CD4-positive, alpha-beta memory T cell (primary cell): ENCODE measurements at regions of chr11 and their contacts with region 1.

Region 1: DNA sequence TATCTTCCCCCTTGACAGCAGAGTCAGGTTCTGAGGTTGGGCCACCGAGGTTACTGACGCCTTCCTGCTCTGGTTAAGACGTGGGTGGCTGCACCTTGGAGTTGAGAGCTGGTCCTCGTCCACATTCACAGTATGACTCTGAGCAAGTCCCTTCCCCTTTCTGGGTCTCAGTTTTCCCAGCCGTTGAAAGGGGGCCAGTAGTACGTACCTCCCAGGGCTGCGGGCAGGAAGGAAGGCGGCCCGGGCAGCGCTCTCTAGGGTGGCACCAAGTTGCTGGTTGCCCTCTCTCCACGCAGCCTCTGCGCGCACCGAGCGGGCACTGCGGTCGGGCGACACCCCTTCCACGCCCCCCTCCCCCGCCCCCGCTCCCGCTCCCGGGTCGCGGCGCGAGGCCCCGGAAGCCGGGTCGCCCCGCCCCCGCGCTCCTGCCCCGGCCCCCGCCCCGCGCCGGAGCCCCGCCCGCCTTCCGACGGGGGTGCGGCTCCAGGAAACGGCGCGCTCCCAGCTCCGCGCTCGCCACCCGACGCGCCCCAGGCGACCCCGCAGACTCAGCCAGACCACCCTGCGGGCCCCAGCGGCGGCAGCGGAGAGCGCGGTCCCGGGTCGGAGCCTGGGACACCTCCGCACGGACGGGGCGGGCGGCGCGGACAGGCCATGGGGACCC is at the start of gene EHBP1L1:
- DNase-seq: peak; percentile 71 to 87 (median 81)
- H3K4me3 ChIP-seq: peak within 1 kb of the TSS; percentile 88 to 89
- H3K4me3 Mint-ChIP-seq: peak within 1 kb of the TSS; percentile 93 to 99 (median 96)
- H3K27ac ChIP-seq: peak within 1 kb of the TSS; percentile 99
- H3K27ac Mint-ChIP-seq: peak within 1 kb of the TSS; percentile 97 to 99 (median 98)
- H3K4me1 ChIP-seq: peaks cover 66% of the 10 kb centered on the region
- H3K4me1 Mint-ChIP-seq: peaks cover 25 to 76% (median 52%) of the 10 kb centered on the region in 4 donors
- H3K27me3 ChIP-seq: no peaks in the 10 kb centered on the region
- H3K27me3 Mint-ChIP-seq: no peaks in the 10 kb centered on the region
- total RNA-seq, gene EHBP1L1: 151 to 154 TPM

Region 2: DNA sequence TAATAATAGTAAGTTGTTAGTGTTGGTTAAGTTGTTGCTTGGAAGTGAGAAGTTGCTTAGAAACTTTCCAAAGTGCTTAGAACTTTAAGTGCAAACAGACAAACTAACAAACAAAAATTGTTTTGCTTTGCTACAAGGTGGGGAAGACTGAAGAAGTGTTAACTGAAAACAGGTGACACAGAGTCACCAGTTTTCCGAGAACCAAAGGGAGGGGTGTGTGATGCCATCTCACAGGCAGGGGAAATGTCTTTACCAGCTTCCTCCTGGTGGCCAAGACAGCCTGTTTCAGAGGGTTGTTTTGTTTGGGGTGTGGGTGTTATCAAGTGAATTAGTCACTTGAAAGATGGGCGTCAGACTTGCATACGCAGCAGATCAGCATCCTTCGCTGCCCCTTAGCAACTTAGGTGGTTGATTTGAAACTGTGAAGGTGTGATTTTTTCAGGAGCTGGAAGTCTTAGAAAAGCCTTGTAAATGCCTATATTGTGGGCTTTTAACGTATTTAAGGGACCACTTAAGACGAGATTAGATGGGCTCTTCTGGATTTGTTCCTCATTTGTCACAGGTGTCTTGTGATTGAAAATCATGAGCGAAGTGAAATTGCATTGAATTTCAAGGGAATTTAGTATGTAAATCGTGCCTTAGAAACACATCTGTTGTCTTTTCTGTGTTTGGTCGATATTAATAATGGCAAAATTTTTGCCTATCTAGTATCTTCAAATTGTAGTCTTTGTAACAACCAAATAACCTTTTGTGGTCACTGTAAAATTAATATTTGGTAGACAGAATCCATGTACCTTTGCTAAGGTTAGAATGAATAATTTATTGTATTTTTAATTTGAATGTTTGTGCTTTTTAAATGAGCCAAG is 150.4 kb before region 1 on chr11:
- CTCF ChIA-PET with region 1: no interaction called
- POLR2A ChIA-PET with region 1: interaction called, 59 read pairs
- intact Hi-C with region 1: loop called (anchors 5 kb)
- DNase-seq: peak; percentile 87 to 98 (median 94)
- H3K4me3 ChIP-seq: peak overlapping the region; percentile 95 to 99
- H3K4me3 Mint-ChIP-seq: peak overlapping the region; percentile 92 to 97 (median 95)
- H3K27ac ChIP-seq: peak overlapping the region; percentile 98
- H3K27ac Mint-ChIP-seq: peak overlapping the region; percentile 93 to 100 (median 97)
- H3K4me1 ChIP-seq: peaks cover 50% of the 10 kb centered on the region
- H3K4me1 Mint-ChIP-seq: peaks cover 41 to 83% (median 47%) of the 10 kb centered on the region in 4 donors
- H3K27me3 ChIP-seq: no peaks in the 10 kb centered on the region
- H3K27me3 Mint-ChIP-seq: peaks cover 0 to 4% of the 10 kb centered on the region in 2 donors

Region 3: GRCh38 chr11:65524741-65525545 is 50.8 kb before region 1 on chr11 and contains the start of gene SCYL1:
- CTCF ChIA-PET with region 1: interaction called, 6 read pairs
- POLR2A ChIA-PET with region 1: interaction called, 19 read pairs
- intact Hi-C with region 1: loop called (anchors 2 kb)
- DNase-seq: peak; percentile 72 to 82 (median 75)
- H3K4me3 ChIP-seq: peak within 1 kb of the TSS; percentile 78 to 83
- H3K4me3 Mint-ChIP-seq: peak within 1 kb of the TSS; percentile 81 to 92 (median 88)
- H3K27ac ChIP-seq: peak within 1 kb of the TSS; percentile 84
- H3K27ac Mint-ChIP-seq: peak within 1 kb of the TSS; percentile 81 to 98 (median 94)
- H3K4me1 ChIP-seq: peaks cover 54% of the 10 kb centered on the region
- H3K4me1 Mint-ChIP-seq: peaks cover 35 to 63% (median 49%) of the 10 kb centered on the region in 4 donors
- H3K27me3 ChIP-seq: no peaks in the 10 kb centered on the region
- H3K27me3 Mint-ChIP-seq: no peaks in the 10 kb centered on the region
- total RNA-seq, gene SCYL1: 72.5 to 81.3 TPM

Region 4: DNA sequence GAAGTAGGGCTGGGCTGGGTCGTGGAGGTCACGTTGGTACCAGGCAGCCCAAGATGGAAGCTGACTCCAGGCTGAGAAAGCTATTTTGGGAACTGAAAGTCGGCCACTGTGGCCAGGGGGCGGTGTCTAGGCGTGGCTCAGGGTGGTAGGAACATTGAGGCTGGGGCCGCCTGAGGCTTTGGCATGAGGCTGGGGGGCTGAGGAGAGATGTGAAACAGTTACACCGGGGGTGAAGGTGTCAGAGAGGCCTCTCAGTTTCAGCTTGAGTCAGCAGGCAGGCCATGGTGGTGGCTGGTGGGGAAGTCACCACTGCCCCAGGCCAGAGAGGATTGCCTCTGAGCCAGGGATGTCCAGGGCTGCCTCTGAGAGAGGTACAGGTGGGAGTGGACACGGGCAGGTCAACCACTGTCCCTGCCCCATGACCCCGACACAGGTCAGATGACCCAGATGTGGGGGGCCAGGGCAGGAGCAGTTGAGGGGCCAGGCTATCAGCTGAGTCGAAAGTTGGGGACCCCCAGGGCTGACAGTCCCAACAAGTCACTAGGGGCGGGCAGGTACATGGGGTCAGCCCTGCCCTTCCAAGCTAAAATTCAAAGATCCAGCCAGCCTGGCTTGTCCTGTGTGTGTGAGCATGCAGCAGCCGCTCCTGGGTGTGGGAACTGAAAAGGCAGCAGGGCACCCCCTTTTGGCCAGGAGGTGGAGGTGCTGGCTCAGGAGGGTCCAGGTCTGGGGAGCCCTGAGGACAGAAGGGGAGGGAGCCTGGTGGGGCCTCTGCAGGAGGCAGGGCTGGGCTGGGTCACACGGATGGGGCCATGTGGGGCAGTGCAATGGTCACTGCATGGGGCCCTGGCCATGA is 12.7 kb after region 1 on chr11:
- CTCF ChIA-PET with region 1: interaction called, 50 read pairs
- POLR2A ChIA-PET with region 1: interaction called, 118 read pairs
- intact Hi-C with region 1: loop called (anchors 1 kb)
- DNase-seq: peak; percentile 78 to 82 (median 78)
- H3K4me3 ChIP-seq: no peak overlapping the region
- H3K4me3 Mint-ChIP-seq: peak overlapping the region in 3 of 8 donors; percentile 11 to 46 (median 25)
- H3K27ac ChIP-seq: peak overlapping the region; percentile 57
- H3K27ac Mint-ChIP-seq: peak overlapping the region; percentile 77 to 91 (median 87)
- H3K4me1 ChIP-seq: peaks cover 17% of the 10 kb centered on the region
- H3K4me1 Mint-ChIP-seq: peaks cover 13 to 33% (median 20%) of the 10 kb centered on the region in 4 donors
- H3K27me3 ChIP-seq: no peaks in the 10 kb centered on the region
- H3K27me3 Mint-ChIP-seq: no peaks in the 10 kb centered on the region

Region 5: DNA sequence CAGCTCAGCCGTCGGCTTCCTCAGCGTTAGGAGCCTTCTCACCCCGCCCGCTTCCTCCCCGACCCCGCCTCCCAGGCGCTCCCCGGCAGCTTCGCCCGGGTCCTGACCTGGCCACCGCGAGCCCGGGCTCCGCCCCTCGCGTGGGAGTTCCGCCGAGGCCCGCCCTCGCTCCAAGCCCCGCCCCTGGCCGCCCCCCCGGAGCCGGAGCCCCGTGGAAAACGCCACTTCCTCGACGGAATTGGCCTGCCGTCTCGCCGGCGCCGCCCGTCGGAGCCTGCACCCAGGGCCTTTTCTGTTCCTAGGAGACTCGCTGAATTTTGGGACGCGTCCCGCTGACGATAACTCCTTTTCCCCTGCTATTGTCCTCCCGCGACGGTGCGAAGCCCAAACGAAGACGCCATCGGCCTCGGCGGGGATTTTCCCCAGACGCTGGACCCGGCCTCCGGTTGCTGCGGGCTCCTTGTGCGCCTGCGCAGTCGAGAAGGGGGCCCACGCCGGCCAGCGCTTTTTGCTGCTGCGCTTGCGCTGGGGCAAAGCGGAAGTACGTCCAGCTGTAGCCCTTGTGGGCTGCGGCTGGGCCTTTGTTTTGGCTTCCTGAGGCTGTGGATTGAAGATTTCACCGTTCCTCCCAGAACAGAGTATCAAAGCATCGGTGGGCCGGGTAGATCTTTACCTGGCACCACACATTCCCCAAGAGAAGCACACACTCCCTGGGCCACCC is 77.0 kb after region 1 on chr11:
- CTCF ChIA-PET with region 1: no interaction called
- POLR2A ChIA-PET with region 1: interaction called, 18 read pairs
- intact Hi-C with region 1: loop called (anchors 2 kb)
- DNase-seq: peak; percentile 95 to 99 (median 97)
- H3K4me3 ChIP-seq: peak overlapping the region; percentile 50 to 64
- H3K4me3 Mint-ChIP-seq: peak overlapping the region; percentile 88 to 95 (median 91)
- H3K27ac ChIP-seq: peak overlapping the region; percentile 91
- H3K27ac Mint-ChIP-seq: peak overlapping the region; percentile 96 to 99 (median 98)
- H3K4me1 ChIP-seq: peaks cover 35% of the 10 kb centered on the region
- H3K4me1 Mint-ChIP-seq: peaks cover 34 to 59% (median 48%) of the 10 kb centered on the region in 4 donors
- H3K27me3 ChIP-seq: no peaks in the 10 kb centered on the region
- H3K27me3 Mint-ChIP-seq: no peaks in the 10 kb centered on the region

Region 6: DNA sequence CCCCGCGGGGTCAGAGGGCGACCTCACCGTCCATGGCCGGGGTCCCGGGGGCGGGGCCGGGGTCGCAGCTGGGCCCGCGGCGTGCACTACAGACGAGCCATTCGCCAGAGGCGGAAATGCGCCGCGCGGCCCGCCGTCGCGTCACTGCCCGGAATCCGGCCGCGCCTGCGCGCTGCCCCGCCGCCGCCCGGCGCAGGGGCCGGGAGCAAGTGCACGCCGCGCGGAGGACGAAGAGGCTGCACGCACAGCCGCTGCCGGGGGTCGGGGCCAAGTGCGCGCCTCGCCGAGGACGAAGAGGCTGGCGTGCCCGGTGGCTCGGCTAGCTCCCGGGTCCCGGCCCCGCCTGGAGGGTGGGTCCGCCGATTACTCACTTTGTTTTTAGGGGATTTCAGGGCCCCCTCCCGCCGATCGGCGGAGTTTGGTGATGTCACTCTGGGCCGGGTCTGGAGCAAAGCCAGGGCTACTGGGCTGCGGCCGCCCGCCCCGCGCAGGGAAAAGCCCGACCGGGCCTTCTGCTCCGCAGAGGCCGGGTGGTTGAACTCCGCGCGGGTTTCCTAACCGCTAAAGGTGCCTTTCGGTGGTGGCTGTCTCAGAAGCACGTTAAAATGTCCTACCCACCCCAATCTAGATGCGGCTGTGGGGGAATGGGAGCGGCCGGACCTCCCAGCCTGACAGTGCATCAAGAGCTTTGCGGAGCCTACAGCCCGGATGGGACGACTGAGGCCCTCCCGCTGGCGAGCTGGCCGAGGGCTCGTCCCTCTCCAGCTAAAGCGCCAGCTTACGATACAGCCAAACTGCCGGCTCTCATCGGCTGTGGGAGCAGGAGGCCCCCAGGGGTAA is 87.3 kb after region 1 on chr11 and contains the start of gene RELA:
- CTCF ChIA-PET with region 1: no interaction called
- POLR2A ChIA-PET with region 1: interaction called, 14 read pairs
- intact Hi-C with region 1: no loop called
- DNase-seq: peak; percentile 87 to 95 (median 91)
- H3K4me3 ChIP-seq: peak within 1 kb of the TSS; percentile 96 to 97
- H3K4me3 Mint-ChIP-seq: peak within 1 kb of the TSS; percentile 89 to 95 (median 90)
- H3K27ac ChIP-seq: peak within 1 kb of the TSS; percentile 98
- H3K27ac Mint-ChIP-seq: peak within 1 kb of the TSS; percentile 96 to 98 (median 96)
- H3K4me1 ChIP-seq: peaks cover 38% of the 10 kb centered on the region
- H3K4me1 Mint-ChIP-seq: peaks cover 20 to 45% (median 33%) of the 10 kb centered on the region in 4 donors
- H3K27me3 ChIP-seq: no peaks in the 10 kb centered on the region
- H3K27me3 Mint-ChIP-seq: no peaks in the 10 kb centered on the region
- total RNA-seq, gene RELA: 170 to 173 TPM